ENCODE measurements at regions of chr1 and their contacts with region 1.

Region 1: DNA sequence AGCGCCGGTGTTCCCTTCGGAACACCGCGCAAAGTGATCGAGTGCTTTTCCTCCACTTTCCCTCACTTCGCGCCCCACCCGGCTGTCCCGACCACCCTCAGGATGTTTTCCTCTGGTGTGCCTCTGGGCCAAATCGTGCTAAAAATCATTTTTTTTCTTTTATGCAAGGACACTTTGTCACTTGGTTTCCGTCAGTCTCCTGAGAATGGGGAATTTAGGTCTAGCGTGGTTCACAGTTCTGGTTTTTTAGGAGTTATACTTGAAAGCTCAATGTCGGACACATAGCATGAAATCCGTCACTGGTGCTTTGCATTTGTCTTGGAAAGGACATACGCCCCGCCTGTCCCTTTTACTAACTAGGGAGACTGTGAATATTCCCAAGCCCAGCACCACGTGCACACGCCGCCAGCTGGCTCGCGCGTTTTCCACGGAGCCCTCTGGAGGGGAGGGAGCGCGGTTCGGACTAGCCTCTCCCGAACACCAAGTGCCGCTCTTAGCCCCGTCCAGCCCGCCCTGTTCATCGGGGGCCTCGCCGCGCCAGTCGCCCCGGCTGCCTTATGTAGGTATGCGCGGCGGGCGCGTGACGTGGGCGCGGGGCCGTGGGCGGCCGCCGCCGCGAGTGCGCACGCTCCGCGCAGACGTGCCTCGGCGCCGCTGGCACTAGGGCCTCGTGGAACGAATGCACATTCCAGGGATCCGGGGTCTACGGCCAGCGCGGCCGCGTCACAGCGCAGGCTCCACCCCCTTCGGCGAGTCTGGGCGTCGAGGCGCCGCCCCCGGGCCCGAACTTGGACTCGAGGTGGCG is 572 bp upstream of the IRF2BP2 start:
- DNase-seq: peak; percentile 95
- ATAC-seq: peak; percentile 52
- H3K4me3 Mint-ChIP-seq: peak overlapping the region; percentile 79
- H3K27ac Mint-ChIP-seq: peak overlapping the region; percentile 90
- H3K4me1 Mint-ChIP-seq: peaks cover 29% of the 10 kb centered on the region
- H3K27me3 Mint-ChIP-seq: no peaks in the 10 kb centered on the region

Region 2: GRCh38 chr1:234478481-234479309 is 131.9 kb before region 1 on chr1 and contains the start of gene TARBP1:
- CTCF ChIA-PET with region 1: no interaction called
- POLR2A ChIA-PET with region 1: no interaction called
- intact Hi-C with region 1: loop called in 1 of 2 experiments (anchors 1 kb)
- DNase-seq: peak; percentile 86
- ATAC-seq: peak; percentile 81
- H3K4me3 Mint-ChIP-seq: peak within 1 kb of the TSS; percentile 82
- H3K27ac Mint-ChIP-seq: peak within 1 kb of the TSS; percentile 80
- H3K4me1 Mint-ChIP-seq: peaks cover 56% of the 10 kb centered on the region
- H3K27me3 Mint-ChIP-seq: peaks cover 16% of the 10 kb centered on the region
- total RNA-seq, gene TARBP1: 37.7 to 41.5 TPM

Region 3: GRCh38 chr1:234676103-234676594 is 65.6 kb after region 1 on chr1:
- CTCF ChIA-PET with region 1: no interaction called
- POLR2A ChIA-PET with region 1: no interaction called
- intact Hi-C with region 1: loop called in 1 of 2 experiments (anchors 5 kb)
- DNase-seq: peak; percentile 79
- ATAC-seq: peak; percentile 94
- H3K4me3 Mint-ChIP-seq: peak overlapping the region; percentile 67
- H3K27ac Mint-ChIP-seq: peak overlapping the region; percentile 65
- H3K4me1 Mint-ChIP-seq: peaks cover 16% of the 10 kb centered on the region
- H3K27me3 Mint-ChIP-seq: no peaks in the 10 kb centered on the region

Region 4: GRCh38 chr1:234772345-234773147 is 162.0 kb after region 1 on chr1:
- CTCF ChIA-PET with region 1: interaction called, 4 read pairs
- POLR2A ChIA-PET with region 1: interaction called, 11 read pairs
- intact Hi-C with region 1: loop called (anchors 1 kb)
- DNase-seq: peak; percentile 95
- ATAC-seq: peak; percentile 78
- H3K4me3 Mint-ChIP-seq: peak overlapping the region; percentile 45
- H3K27ac Mint-ChIP-seq: peak overlapping the region; percentile 95
- H3K4me1 Mint-ChIP-seq: peaks cover 59% of the 10 kb centered on the region
- H3K27me3 Mint-ChIP-seq: peaks cover 1% of the 10 kb centered on the region

Region 5: GRCh38 chr1:234963180-234963903 is 352.8 kb after region 1 on chr1:
- CTCF ChIA-PET with region 1: interaction called, 3 read pairs
- POLR2A ChIA-PET with region 1: no interaction called
- intact Hi-C with region 1: loop called (anchors 1 kb)
- DNase-seq: peak; percentile 96
- ATAC-seq: peak; percentile 81
- H3K4me3 Mint-ChIP-seq: peak overlapping the region; percentile 45
- H3K27ac Mint-ChIP-seq: peak overlapping the region; percentile 96
- H3K4me1 Mint-ChIP-seq: peaks cover 76% of the 10 kb centered on the region
- H3K27me3 Mint-ChIP-seq: no peaks in the 10 kb centered on the region

Region 6: DNA sequence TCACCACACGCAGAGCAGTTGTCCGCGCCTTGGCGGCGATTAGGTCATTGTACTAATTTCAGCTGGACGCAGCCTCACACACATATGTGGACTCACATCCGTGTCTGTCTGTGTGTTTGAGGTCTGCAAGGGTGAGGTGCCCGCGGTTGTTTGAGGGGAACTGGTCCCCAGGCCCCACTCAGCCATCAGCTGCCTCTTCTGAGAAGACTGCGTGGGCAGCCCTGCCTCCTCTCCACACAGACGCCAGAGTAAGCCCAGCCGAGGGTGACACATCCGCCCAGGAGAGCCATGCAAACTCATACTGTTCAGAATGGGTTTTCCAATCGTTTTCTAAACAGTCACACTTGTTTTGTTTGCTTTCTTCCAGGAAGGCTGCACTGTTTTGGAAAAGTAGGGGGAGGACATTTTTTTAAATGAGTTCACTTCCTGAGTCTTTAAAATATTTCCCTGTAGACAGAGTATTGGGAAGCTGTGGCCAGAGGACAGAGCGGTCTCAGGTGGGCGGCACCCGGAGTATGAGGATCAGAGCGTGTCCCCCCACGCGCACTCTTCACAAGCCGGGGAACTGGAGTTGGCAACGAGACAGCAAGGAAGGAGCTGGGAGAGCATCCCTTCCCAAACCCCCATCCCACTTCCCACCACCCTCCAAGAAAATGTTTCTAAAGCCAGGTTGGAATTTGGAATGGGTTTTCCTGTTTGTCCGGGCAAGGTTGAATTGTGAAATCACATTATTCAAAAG is 464.8 kb after region 1 on chr1:
- CTCF ChIA-PET with region 1: interaction called, 3 read pairs
- POLR2A ChIA-PET with region 1: interaction called, 4 read pairs
- intact Hi-C with region 1: loop called in 1 of 2 experiments (anchors 2 kb)
- DNase-seq: peak; percentile 86
- ATAC-seq: peak; percentile 64
- H3K4me3 Mint-ChIP-seq: peak overlapping the region; percentile 41
- H3K27ac Mint-ChIP-seq: peak overlapping the region; percentile 98
- H3K4me1 Mint-ChIP-seq: peaks cover 28% of the 10 kb centered on the region
- H3K27me3 Mint-ChIP-seq: no peaks in the 10 kb centered on the region